GM10248 (cell line): ENCODE measurements at regions of chr1 and their contacts with region 1.

Region 1: GRCh38 chr1:47262787-47263413 is 30.9 kb upstream of the TAL1 start:
- DNase-seq: peak; percentile 53
- CTCF ChIP-seq: peak; percentile 59

Region 2: DNA sequence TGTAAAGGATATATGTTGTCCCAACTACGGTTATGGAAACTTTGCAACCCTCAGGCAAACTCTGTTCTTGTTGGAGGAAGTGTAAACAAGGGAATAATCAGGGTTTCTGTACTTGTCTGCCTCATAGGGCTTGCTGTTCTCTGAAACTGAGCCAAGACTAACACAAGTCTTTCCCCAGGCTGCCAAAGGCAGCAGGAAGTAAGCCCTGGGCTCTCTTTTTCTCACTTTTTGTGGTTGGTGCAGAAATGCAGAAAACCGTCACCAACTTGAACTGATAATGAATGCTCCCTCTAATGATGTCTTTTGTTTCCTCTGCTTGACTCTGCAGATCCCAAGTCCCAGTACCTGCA is 231.8 kb before region 1 on chr1:
- CTCF ChIA-PET with region 1: no interaction called
- POLR2A ChIA-PET with region 1: no interaction called
- DNase-seq: no peak
- CTCF ChIP-seq: no peak

Region 3: DNA sequence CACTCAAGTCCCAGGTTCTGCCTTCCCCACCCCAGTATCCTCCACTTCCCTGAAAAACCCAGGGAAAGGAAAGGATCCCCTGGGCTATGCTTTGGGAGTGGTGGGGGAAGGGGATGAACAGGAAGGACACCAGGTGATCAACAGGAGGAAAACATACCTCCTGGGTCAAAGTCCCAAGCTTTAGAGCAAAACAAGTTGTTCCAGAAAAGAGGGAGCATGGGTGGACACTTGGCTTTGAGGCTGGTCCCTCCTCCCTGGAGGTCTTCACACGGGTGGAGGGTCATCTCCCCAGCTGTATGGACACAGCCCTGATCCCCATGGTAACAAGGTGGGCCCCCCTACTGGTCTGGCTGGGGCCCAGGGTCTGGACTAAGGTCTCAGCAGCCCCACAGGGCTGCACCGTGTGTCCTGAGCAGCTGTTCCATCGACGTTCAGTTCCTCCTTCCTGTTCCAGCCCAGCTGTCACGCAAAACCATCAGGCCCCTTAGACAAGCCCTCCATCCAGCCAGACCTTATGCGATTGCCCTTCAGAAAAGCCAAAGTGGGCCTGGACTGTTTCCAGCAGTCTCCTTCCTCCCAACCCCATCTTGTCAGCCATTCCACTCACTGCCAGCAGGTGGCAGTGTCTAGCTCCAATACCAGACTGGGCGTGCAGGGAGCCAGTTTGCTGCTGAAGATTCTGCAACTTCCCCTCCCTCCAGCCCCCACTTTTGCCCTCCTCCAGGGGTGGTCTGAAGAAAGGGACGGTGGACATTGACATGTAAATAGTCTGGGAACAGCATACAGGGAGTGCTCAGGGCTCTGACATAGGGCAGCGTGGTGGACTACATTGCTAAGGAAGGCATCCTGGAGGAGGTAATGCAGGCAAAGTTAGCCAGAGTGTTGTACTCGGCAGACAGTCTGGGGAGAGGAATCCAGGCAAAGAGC is 70.2 kb before region 1 on chr1:
- CTCF ChIA-PET with region 1: interaction called, 54 read pairs
- POLR2A ChIA-PET with region 1: no interaction called
- DNase-seq: peak; percentile 79
- CTCF ChIP-seq: peak; percentile 98

Region 4: DNA sequence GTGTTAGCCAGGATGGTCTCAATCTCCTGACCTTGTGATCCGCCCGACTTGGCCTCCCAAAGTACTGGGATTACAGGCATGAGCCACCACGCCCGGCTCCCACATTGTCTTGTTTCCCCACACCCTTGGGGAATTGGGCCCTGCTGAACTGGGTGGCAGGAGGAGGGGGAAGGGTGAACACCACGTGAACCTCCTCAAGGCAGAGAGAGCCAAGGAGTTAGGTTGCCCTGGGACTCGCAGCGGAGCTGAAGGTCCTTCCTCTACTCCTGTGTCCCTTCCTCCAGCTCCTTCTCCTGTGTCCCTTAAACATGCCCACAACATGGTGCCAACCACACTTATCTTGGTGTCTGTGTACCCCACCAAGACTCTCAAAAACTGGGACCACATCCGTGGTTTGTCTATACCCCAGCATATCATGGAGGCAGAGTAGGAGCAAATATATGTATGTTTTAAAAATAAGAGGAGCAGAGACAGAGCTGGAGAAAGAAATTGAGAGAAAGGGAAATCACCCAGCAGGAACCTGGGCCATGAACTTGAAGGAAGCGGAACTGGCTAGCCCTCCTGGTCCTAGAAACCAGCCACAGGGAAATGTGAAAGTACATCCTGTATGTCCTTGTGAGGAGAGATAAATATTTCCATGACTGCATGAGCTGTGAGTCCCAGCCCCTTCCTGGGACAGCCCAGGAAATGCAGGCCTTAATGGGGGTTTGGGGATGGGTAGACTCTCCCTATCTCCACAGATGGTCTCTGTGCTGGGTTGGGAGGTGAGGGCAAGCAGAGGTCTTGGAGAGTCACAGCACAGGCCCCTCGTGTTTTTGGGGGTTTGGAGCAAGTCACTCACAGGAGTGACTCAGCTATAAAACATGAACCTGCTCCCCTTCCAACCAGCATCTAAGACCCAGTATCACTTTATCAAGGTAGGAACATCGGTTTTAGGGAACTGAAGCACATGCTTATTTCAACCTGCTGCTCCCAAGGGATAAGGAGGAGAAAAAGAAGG is 21.5 kb before region 1 on chr1:
- CTCF ChIA-PET with region 1: interaction called, 24 read pairs
- POLR2A ChIA-PET with region 1: no interaction called
- DNase-seq: no peak
- CTCF ChIP-seq: no peak

Region 5: DNA sequence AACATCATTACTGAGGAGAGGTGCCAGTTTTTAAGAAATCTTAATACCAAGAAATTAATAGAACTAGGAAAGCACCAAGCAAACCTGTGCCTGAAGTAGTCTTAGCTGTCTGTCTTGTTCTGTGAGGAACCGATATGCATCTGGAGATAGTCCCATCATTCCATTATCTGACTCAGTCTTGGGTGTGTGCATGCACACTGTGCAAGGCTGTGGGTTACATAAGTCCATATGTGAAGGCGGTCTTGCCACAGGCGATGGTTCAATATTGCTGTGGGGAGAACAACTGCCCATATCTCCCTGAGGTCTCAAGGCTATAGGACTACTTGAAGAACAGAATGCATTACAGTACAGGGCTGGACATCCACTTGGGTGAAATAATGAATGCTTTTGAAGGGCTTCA is 17.3 kb after region 1 on chr1:
- CTCF ChIA-PET with region 1: interaction called, 17 read pairs
- POLR2A ChIA-PET with region 1: interaction called, 4 read pairs
- DNase-seq: no peak
- CTCF ChIP-seq: no peak